ENCODE measurements at regions of chr6 and their contacts with region 1.

Region 1: DNA sequence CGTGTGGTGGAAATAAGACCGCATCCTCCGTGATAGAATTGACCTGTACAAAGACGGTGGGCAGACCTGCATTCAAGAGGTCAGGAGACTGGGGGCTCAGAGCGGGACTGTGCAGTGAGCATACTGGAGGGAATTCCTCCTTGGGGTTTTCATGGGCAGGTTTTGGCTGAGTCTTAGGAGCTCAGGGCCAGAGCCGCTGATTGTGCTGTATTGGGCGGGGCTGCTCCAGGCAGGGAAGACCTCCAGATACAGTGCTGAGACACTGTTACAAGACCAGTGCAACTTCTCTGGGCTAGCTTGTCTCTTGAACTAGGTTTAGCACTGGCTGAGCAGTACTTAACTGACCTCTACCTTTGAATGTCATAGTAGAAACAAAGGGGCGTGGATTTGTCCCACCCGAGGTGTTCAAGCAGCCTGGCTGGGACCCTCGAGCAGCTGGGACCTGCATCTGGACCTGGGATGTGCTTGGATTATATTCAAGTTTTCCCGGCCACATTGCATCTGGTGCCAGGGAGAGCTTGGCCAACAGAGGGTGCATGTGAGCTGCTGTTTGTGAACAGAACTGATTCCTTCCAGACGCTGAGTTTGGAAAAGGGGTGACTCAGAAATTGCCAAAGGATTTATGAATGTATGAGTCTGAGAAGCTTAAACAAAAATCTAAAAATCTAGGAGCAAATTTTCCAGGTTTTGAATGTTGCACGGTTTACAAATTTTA is 33.4 kb upstream of the SLC22A1 start:
- DNase-seq: peak; percentile 75
- H3K4me3 ChIP-seq: no peak overlapping the region; a peak in 1 of 4 replicates
- H3K27ac ChIP-seq: no peak overlapping the region
- H3K4me1 ChIP-seq: no peaks in the 10 kb centered on the region; a peak in 1 of 4 replicates
- H3K27me3 ChIP-seq: no peaks in the 10 kb centered on the region
- CTCF ChIP-seq: peak; percentile 87
- EP300 ChIP-seq: no peak
- RAD21 ChIP-seq: peak; percentile 60

Region 2: DNA sequence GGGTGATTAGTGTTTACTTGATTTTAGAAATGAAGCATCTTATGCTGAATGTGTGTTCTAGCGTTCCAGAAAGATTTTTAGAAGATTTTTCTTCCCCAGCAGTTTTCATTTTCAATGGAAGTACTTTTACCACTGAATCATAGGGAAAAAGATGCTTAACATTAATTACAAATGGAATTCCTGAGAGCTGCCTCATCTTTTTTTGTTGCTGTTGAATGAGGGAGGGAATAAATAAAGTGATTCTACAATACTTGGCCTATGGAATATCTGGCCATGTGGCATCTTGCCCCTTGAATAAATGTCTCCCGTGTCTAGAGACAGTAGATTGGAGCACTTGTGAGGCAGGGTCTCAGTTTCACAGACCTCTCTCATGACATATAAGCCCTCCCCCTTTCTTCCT is 10.7 kb before region 1 on chr6:
- CTCF ChIA-PET with region 1: interaction called, 23 read pairs
- POLR2A ChIA-PET with region 1: no interaction called
- DNase-seq: no peak
- H3K4me3 ChIP-seq: no peak overlapping the region
- H3K27ac ChIP-seq: no peak overlapping the region
- H3K4me1 ChIP-seq: peaks cover 0 to 10% of the 10 kb centered on the region in 2 experiments; a peak in 1 of 4 replicates
- H3K27me3 ChIP-seq: no peaks in the 10 kb centered on the region
- CTCF ChIP-seq: no peak
- EP300 ChIP-seq: no peak
- RAD21 ChIP-seq: no peak

Region 3: GRCh38 chr6:160101277-160102215 is 13.3 kb after region 1 on chr6:
- CTCF ChIA-PET with region 1: interaction called, 28 read pairs
- POLR2A ChIA-PET with region 1: no interaction called
- DNase-seq: no peak
- H3K4me3 ChIP-seq: no peak overlapping the region
- H3K27ac ChIP-seq: no peak overlapping the region
- H3K4me1 ChIP-seq: no peaks in the 10 kb centered on the region
- H3K27me3 ChIP-seq: no peaks in the 10 kb centered on the region
- CTCF ChIP-seq: no peak
- EP300 ChIP-seq: no peak
- RAD21 ChIP-seq: no peak

Region 4: DNA sequence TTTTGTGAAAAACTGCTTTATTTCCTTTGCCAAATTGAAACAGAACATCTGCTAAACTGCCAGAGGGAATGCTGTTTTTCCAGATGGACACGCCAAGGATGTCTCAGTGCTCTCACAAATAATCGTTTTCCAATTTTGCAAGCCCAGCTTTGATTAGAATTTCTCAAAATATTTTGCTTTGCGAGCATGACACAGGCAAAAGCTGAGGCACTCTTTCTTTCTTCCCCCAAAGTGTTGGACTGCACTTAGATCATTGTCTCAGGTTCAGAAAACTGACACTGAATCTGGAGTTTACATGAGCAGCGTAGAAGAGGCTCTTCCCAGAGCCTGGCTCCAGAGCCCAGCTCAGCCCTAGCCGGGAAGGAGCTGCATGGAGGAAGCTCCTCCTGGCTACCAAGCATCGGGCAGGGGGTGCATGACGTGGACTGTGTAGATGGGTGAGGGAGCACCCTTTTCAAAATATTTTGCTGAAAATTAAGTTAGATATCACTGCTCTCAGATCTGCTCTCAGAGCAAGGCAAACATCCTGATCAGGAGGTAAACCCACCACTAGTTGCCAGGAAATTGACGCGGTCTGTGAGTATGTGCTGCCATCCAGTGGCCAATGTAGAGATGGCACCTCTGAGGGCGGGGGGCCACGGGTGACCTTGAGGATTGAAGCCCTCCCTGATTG is 367.5 kb after region 1 on chr6:
- CTCF ChIA-PET with region 1: interaction called, 14 read pairs
- POLR2A ChIA-PET with region 1: no interaction called
- DNase-seq: peak; percentile 64
- H3K4me3 ChIP-seq: peak overlapping the region in 1 of 2 experiments; percentile 11; a peak in 1 of 4 replicates
- H3K27ac ChIP-seq: no peak overlapping the region
- H3K4me1 ChIP-seq: peaks cover 0 to 2% of the 10 kb centered on the region in 2 experiments; a peak in 1 of 4 replicates
- H3K27me3 ChIP-seq: peaks cover 17% of the 10 kb centered on the region; the same call in 1 of the 2 replicates
- CTCF ChIP-seq: peak; percentile 98
- EP300 ChIP-seq: no peak
- RAD21 ChIP-seq: peak; percentile 88